CD4-positive, alpha-beta T cell (primary cell): ENCODE measurements at regions of chr7 and their contacts with region 1.

Region 1: DNA sequence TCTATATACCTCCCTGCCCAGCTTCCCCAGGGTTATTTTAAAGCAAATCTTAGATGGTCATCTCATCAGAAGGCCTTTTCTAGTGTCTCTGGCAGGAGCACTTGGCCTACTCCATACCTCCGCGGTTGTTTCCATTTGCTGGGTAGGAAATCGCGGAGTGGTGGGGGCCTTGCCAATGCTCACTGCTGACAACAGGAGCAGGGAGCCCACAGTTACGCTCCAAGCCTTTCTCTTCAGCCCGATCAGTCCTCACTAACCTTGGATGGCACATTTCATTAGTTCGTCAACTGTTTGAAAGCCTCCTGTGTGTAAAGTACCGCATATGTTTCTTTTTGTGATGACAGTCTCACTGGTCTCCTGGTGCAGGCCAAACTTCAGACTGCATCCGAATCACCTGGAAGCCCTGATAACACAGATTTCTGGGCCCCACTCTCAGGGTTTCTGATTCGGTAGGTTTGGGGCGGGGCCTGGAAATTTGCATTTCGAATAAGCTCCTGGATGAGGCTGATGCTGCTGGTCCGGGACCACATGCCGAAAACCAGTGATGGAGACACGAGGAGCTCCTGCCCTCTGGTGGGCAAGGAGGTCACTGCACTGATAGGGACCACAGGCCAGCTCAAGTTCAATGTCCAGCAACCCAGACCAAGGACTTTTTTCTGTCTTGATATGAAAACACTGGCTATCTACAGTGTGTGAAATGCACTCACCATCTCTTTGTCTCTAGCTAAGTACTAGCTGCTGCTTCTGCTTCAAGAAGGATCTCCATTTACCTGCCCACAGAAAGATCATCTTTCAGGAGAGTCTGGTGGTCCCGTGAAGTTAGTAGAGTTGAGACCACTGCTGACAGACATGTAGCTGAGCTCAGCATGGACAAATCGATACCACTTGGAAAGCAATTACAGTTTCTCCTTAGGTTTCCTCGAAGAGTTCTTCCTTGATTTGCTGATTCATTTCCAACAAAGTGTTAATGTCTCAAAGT is 14.0 kb downstream of the LRGUK start:
- DNase-seq: peak; percentile 7 to 65 (median 30)
- ATAC-seq: no peak
- H3K4me3 ChIP-seq: no peak overlapping the region
- H3K4me3 Mint-ChIP-seq: no peak overlapping the region
- H3K27ac ChIP-seq: no peak overlapping the region
- H3K27ac Mint-ChIP-seq: no peak overlapping the region
- H3K4me1 ChIP-seq: no peaks in the 10 kb centered on the region
- H3K4me1 Mint-ChIP-seq: no peaks in the 10 kb centered on the region
- H3K27me3 ChIP-seq: no peaks in the 10 kb centered on the region
- H3K27me3 Mint-ChIP-seq: no peaks in the 10 kb centered on the region
- CTCF ChIP-seq: peak; percentile 84

Region 2: GRCh38 chr7:134355927-134356326 is 214.7 kb after region 1 on chr7:
- CTCF ChIA-PET with region 1: no interaction called
- POLR2A ChIA-PET with region 1: no interaction called
- intact Hi-C with region 1: loop called in 1 of 2 experiments (anchors 5 kb)
- DNase-seq: no peak
- ATAC-seq: no peak
- H3K4me3 ChIP-seq: no peak overlapping the region
- H3K4me3 Mint-ChIP-seq: no peak overlapping the region
- H3K27ac ChIP-seq: no peak overlapping the region
- H3K27ac Mint-ChIP-seq: no peak overlapping the region
- H3K4me1 ChIP-seq: no peaks in the 10 kb centered on the region
- H3K4me1 Mint-ChIP-seq: no peaks in the 10 kb centered on the region
- H3K27me3 ChIP-seq: no peaks in the 10 kb centered on the region
- H3K27me3 Mint-ChIP-seq: peaks cover 3% of the 10 kb centered on the region
- CTCF ChIP-seq: no peak